Activated CD4-positive, alpha-beta T cell treated with anti-CD3 and anti-CD28 coated beads for 36 hours (primary cell): ENCODE measurements at regions of chrX and their contacts with region 1.

Region 1: GRCh38 chrX:16946361-16946964 is at the start of gene REPS2:
- DNase-seq: peak; percentile 88
- ATAC-seq: peak; percentile 99
- H3K4me3 Mint-ChIP-seq: peak within 1 kb of the TSS; percentile 72
- H3K27ac Mint-ChIP-seq: no peak within 1 kb of the TSS
- H3K4me1 Mint-ChIP-seq: peaks cover 2% of the 10 kb centered on the region
- H3K27me3 Mint-ChIP-seq: peaks cover 10% of the 10 kb centered on the region
- total RNA-seq, gene REPS2: not detected

Region 2: DNA sequence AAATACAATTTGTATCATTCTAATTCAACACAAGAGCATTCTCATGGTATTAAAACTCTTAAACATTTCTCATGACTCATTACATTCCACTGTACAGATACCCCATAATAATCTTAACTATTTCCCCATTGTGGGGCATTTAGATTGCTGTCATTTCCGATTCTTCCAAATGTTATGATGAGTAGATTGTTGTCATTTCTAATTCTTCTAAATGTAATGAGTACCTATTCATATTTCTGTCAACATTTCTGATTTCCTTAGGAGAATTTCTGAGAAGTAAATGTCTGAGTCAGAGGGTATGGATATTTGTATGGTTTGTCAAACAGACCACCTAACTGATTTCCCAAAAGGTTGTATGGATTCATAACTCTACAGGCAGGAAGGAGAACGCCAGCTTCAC is 288.2 kb before region 1 on chrX:
- CTCF ChIA-PET with region 1: no interaction called
- POLR2A ChIA-PET with region 1: no interaction called
- intact Hi-C with region 1: no loop called
- DNase-seq: no peak
- ATAC-seq: no peak
- H3K4me3 Mint-ChIP-seq: no peak overlapping the region
- H3K27ac Mint-ChIP-seq: no peak overlapping the region
- H3K4me1 Mint-ChIP-seq: no peaks in the 10 kb centered on the region
- H3K27me3 Mint-ChIP-seq: no peaks in the 10 kb centered on the region

Region 3: DNA sequence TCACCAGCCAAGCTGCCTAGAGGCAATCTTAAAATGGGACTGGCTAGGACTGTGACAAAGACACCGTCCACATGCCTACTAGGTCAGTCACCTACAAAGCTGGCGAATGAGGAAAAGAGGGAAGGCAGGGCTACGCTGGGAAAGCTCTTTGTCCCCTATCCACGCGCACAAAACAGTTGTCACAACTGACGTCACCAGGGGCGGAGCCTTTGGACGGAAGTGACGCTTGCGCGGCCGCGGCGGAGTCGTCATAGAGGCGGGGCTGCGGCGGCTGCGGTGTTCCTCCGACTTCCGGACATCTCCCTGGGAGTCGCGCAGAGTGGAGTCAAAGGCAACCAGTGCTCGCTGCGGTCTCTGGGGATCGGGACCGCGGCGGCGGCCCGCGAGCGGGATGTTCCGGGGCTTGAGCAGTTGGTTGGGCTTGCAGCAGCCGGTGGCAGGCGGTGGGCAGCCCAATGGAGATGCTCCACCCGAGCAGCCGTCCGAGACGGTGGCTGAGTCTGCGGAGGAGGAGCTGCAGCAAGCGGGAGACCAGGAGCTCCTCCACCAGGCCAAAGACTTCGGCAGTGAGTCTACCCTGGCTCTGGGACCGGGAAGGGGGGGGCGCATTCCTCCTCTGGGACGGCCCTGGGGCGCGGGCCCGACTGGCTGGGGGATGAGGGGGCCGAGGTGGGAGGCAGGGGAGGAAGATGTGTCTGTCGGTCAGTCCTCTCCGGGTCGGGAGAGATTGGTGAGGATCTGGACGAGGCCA is 227.0 kb before region 1 on chrX and contains the start of gene SYAP1:
- CTCF ChIA-PET with region 1: no interaction called
- POLR2A ChIA-PET with region 1: no interaction called
- intact Hi-C with region 1: loop called in 1 of 2 experiments (anchors 10 kb)
- DNase-seq: peak; percentile 94
- ATAC-seq: peak; percentile 96
- H3K4me3 Mint-ChIP-seq: peak within 1 kb of the TSS; percentile 74
- H3K27ac Mint-ChIP-seq: peak within 1 kb of the TSS; percentile 88
- H3K4me1 Mint-ChIP-seq: peaks cover 22% of the 10 kb centered on the region
- H3K27me3 Mint-ChIP-seq: no peaks in the 10 kb centered on the region
- total RNA-seq, gene SYAP1: 22.8 to 31.4 TPM

Region 4: DNA sequence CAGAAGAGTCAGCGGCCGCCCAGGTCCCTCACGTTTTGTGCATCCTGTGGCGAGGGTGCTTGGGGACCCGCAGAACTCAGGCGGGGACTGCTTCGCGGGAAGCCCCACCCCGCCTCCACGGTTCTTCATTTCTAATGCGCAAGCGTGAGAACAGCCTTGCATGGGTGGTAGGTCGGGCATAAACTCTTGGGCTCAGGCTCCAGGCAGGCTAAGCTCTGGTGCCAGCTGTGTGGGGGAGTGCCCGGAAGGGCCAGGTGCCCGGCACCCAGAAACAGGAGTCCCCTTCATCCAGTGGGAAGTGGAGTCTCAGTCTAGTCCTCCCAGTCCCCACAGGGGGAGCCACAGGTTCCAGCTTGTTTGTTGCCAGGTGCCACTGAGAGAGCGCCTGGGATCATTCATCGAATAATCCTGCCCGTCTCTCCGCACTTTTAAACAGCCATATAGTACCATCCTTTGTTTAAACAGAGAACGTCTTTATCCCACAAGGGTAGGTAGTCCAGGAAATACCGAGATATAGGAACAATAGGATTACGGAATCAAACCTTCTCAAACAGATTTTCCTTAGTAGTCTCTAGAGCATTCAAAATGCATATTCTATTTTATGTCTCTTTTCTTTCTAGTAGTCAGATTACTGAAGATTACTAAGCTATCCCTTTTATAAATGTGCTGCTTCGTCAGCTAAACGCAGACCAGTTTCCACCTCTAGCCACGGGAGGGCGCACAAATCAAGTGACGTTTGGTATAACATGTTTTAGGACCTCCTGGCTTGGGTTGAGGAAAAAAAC is 63.6 kb before region 1 on chrX:
- CTCF ChIA-PET with region 1: interaction called, 5 read pairs
- POLR2A ChIA-PET with region 1: no interaction called
- intact Hi-C with region 1: loop called in 1 of 2 experiments (anchors 2 kb)
- DNase-seq: peak; percentile 82
- ATAC-seq: peak; percentile 83
- H3K4me3 Mint-ChIP-seq: peak overlapping the region; percentile 69
- H3K27ac Mint-ChIP-seq: peak overlapping the region; percentile 86
- H3K4me1 Mint-ChIP-seq: no peaks in the 10 kb centered on the region
- H3K27me3 Mint-ChIP-seq: no peaks in the 10 kb centered on the region

Region 5: GRCh38 chrX:16970977-16971376 is 24.5 kb after region 1 on chrX:
- CTCF ChIA-PET with region 1: no interaction called
- POLR2A ChIA-PET with region 1: no interaction called
- intact Hi-C with region 1: no loop called
- DNase-seq: no peak
- ATAC-seq: no peak
- H3K4me3 Mint-ChIP-seq: no peak overlapping the region
- H3K27ac Mint-ChIP-seq: no peak overlapping the region
- H3K4me1 Mint-ChIP-seq: peaks cover 6% of the 10 kb centered on the region
- H3K27me3 Mint-ChIP-seq: peaks cover 4% of the 10 kb centered on the region